Right lobe of liver (tissue), 6 donors: ENCODE measurements at regions of chr1 and their contacts with region 1.

Region 1: GRCh38 chr1:23867953-23868556 is at the start of gene FUCA1:
- DNase-seq: peak; percentile 94 to 96 (median 95)
- ATAC-seq: peak; percentile 97 to 99 (median 98)
- H3K4me3 ChIP-seq: peak within 1 kb of the TSS; percentile 89 to 99 (median 91)
- H3K27ac ChIP-seq: peak within 1 kb of the TSS; percentile 3 to 55 (median 48)
- H3K4me1 ChIP-seq: peaks cover 0 to 7% (median 3%) of the 10 kb centered on the region in 4 donors
- H3K27me3 ChIP-seq: no peaks in the 10 kb centered on the region
- CTCF ChIP-seq: peak; percentile 91 to 97 (median 96)
- POLR2A ChIP-seq: peak; percentile 71
- total RNA-seq, gene FUCA1: 37.1 to 54.7 (median 45.1) TPM

Region 2: GRCh38 chr1:23800400-23801337 is 67.4 kb before region 1 on chr1 and contains the start of gene GALE:
- intact Hi-C with region 1: loop called in 1 of 2 experiments (anchors 10 kb)
- DNase-seq: peak; percentile 97 to 99 (median 99)
- ATAC-seq: peak; percentile 79 to 90 (median 85)
- H3K4me3 ChIP-seq: peak within 1 kb of the TSS; percentile 71 to 80 (median 76)
- H3K27ac ChIP-seq: peak within 1 kb of the TSS; percentile 89 to 96 (median 94)
- H3K4me1 ChIP-seq: peaks cover 0 to 45% (median 14%) of the 10 kb centered on the region in 4 donors
- H3K27me3 ChIP-seq: no peaks in the 10 kb centered on the region
- CTCF ChIP-seq: no peak
- POLR2A ChIP-seq: peak; percentile 80
- total RNA-seq, gene GALE: 25.9 to 46.9 (median 42.0) TPM